Activated CD4-positive, alpha-beta T cell treated with anti-CD3 and anti-CD28 coated beads for 36 hours (primary cell): ENCODE measurements at regions of chr2 and their contacts with region 1.

Region 1: DNA sequence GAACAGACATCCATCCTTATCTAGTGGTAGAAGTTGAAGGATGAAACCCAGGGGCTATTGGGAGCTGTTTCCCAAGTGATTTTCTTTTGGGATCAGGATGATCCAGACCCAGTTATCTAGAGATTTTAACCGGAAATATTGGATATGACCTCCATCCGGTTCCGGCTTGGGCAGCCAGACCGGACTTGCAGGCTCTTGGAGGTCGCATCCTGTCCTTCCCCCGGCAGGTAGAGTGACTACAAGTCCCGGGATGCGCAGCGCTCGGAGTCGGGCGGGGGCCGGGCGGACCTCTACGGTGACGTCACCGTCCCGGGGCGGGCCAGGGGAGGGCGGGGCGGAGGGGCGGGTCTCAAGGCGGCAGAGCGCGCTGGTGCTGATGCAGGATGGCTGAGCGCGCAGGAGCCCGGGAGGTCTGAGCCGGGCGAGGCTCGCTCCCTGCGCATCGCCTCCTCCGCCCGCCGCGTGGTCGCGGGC is at the start of gene KIF5C:
- DNase-seq: peak; percentile 97
- ATAC-seq: peak; percentile 86
- H3K4me3 Mint-ChIP-seq: peak within 1 kb of the TSS; percentile 82
- H3K27ac Mint-ChIP-seq: peak within 1 kb of the TSS; percentile 73
- H3K4me1 Mint-ChIP-seq: peaks cover 7% of the 10 kb centered on the region
- H3K27me3 Mint-ChIP-seq: peaks cover 16% of the 10 kb centered on the region
- total RNA-seq, gene KIF5C: 13.5 to 14.1 TPM

Region 2: DNA sequence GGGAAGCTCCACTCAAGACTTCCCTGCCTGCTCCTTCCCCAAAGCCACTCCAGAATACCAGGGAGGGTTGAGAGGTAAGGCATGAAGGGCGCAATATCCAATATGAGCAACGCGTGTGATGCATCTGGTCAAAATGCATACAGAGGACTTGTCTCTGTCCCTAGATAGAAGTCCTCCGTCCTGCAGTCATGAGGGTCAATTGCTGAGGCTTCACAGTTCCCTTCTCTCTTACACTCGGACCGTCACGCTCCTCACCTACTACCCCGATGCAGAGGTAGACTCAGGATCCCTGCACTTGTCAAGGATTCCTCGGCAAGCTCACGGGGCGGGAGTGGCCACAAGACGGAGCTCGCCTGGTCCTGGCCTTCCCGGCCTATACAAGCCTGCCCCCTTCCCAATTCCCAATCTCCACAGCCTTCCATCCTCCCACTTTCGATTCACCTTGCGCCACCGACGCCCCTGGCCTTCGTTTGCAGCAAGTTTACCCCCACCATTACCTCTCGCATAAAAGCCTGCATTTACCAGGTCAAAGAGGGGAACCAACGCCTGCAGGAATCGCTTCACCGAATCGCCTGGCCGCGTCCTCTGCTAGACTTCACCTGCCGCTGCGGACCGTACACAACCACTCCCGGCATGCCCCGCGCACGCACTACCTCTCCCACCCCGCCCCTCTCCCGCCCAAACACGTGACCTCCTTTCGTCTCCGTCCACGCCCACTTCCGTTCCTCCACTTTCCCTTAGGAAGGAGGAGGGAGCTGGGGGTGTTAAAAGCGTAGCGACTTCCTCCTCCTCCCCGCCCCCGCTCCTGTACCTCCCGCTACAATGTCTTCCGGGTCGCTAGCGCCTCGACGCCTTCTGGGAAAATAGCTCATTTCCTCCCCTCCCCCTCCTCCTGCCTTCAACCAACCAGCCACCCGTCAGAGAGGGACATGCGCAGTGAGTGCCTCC is 854.5 kb before region 1 on chr2 and contains the start of gene ORC4:
- CTCF ChIA-PET with region 1: no interaction called
- POLR2A ChIA-PET with region 1: no interaction called
- intact Hi-C with region 1: loop called (anchors 1 to 5 kb)
- DNase-seq: peak; percentile 99
- ATAC-seq: peak; percentile 89
- H3K4me3 Mint-ChIP-seq: peak within 1 kb of the TSS; percentile 95
- H3K27ac Mint-ChIP-seq: peak within 1 kb of the TSS; percentile 98
- H3K4me1 Mint-ChIP-seq: peaks cover 44% of the 10 kb centered on the region
- H3K27me3 Mint-ChIP-seq: no peaks in the 10 kb centered on the region
- total RNA-seq, gene ORC4: 41.2 to 41.8 TPM

Region 3: DNA sequence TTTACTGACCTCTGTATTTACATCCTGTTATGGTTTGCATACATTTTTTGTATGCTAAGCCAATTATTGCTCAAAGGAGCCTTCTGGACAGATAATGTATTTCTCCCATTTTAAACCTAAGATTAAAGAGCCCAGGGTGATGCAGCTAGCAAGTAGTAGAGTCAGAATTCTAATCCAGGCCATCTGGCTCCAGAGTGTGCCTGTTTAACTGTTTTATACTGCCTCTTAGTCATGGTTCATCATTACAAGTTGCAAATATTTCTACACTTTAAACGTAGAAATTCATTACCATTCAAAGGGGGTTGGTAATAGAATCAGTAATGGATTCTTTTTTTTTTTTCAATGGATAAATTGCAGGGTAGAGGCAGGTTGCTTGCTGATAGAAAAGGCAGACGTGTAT is 177.9 kb before region 1 on chr2:
- CTCF ChIA-PET with region 1: no interaction called
- POLR2A ChIA-PET with region 1: interaction called, 11 read pairs
- intact Hi-C with region 1: no loop called
- DNase-seq: no peak
- ATAC-seq: no peak
- H3K4me3 Mint-ChIP-seq: no peak overlapping the region
- H3K27ac Mint-ChIP-seq: no peak overlapping the region
- H3K4me1 Mint-ChIP-seq: peaks cover 20% of the 10 kb centered on the region
- H3K27me3 Mint-ChIP-seq: no peaks in the 10 kb centered on the region

Region 4: DNA sequence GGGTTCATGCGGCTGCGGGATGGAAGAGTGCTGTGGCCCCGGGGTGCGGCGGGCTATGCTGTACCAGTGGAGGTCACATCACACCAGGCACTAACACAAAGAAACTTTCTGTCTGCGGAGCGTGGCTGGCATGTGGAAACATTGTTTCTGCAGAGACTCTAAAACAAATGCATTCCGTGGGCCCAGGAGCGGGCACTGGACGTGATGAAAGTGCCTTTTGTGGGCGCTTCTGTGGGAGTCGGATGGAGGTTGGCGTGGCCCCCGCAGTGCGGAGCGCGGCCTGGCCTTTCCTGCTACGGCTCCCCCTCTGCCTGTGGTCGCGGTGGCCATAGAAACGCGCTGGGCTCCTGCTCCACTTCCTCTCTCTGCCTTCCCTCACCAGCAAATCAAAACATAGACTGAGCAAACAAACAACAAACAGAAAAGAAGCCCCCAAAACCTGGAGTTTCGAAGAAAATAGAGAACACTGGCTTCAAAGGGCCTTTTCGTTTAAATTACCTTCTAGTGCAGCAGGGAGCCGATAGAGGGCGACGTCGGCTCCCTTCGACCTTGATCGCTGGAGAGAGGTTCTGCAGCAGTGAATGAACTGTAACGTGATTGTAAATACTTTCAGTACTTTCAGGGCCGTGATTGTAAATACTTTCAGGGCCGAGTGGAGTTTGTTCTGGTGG is 51.5 kb after region 1 on chr2:
- CTCF ChIA-PET with region 1: interaction called, 3 read pairs
- POLR2A ChIA-PET with region 1: interaction called, 4 read pairs
- intact Hi-C with region 1: loop called in 1 of 2 experiments (anchors 1 kb)
- DNase-seq: peak; percentile 78
- ATAC-seq: peak; percentile 84
- H3K4me3 Mint-ChIP-seq: peak overlapping the region; percentile 78
- H3K27ac Mint-ChIP-seq: peak overlapping the region; percentile 88
- H3K4me1 Mint-ChIP-seq: peaks cover 16% of the 10 kb centered on the region
- H3K27me3 Mint-ChIP-seq: no peaks in the 10 kb centered on the region

Region 5: DNA sequence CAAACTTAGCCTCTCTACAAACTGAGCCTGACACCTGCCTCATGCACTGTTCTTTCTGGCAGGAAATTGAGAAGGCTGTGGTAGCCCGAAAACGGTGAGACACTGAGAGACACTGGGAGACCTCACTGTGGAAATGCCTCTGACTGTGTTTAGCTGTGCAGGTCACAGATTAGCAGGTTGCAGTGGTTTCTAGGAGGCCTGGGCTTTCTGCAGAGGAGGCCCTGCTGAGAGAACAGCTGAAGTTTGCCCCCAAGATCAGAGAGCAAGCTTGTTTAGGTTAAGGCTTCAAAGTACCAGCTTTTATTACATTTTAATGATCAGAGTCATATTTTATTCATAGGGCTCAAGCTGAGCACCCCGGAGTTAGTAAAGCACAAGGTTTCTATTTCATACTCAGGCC is 386.8 kb after region 1 on chr2:
- CTCF ChIA-PET with region 1: no interaction called
- POLR2A ChIA-PET with region 1: no interaction called
- intact Hi-C with region 1: no loop called
- DNase-seq: no peak
- ATAC-seq: no peak
- H3K4me3 Mint-ChIP-seq: no peak overlapping the region
- H3K27ac Mint-ChIP-seq: no peak overlapping the region
- H3K4me1 Mint-ChIP-seq: no peaks in the 10 kb centered on the region
- H3K27me3 Mint-ChIP-seq: peaks cover 18% of the 10 kb centered on the region